MCF 10A (cell line): ENCODE measurements at regions of chr10 and their contacts with region 1.

Region 1: DNA sequence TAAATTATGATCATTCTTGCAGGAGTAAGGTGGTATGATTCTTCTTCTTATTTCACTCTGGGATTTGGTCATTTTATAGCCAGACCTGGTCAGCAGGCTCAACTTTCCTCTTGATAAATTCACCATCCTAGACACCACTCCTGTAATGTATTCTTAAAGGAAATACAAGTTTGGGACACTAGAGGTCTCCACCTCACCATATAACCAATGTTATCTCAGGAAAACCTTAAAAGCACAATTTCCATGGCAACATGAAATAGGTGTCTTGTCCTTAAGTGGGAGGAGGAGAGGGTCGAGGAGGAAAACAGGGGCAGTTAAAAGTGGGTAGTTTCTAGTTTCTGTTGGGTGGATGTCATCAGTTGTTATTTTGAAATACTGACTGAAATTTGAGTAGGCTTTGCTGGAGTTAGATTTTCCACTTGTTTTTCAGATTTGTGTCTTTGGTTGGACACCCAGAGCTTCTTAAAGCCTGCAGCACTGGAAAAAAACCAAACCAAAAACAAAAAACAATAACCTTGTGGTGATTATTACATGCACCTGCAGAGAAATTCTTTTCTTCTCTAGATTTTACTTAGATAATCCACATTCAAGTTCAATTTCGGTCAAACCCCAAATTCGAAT is 163.1 kb downstream of the PRKCQ start:
- DNase-seq: peak; percentile 58
- H3K4me3 Mint-ChIP-seq: no peak overlapping the region
- H3K27ac Mint-ChIP-seq: no peak overlapping the region
- H3K4me1 Mint-ChIP-seq: no peaks in the 10 kb centered on the region
- H3K27me3 Mint-ChIP-seq: peaks cover 14% of the 10 kb centered on the region
- CTCF ChIP-seq: peak; percentile 75

Region 2: GRCh38 chr10:6163364-6164270 is 253.4 kb before region 1 on chr10:
- CTCF ChIA-PET with region 1: no interaction called
- POLR2A ChIA-PET with region 1: no interaction called
- intact Hi-C with region 1: no loop called
- DNase-seq: peak; percentile 85
- H3K4me3 Mint-ChIP-seq: peak overlapping the region; percentile 95
- H3K27ac Mint-ChIP-seq: peak overlapping the region; percentile 93
- H3K4me1 Mint-ChIP-seq: peaks cover 18% of the 10 kb centered on the region
- H3K27me3 Mint-ChIP-seq: no peaks in the 10 kb centered on the region
- CTCF ChIP-seq: no peak

Region 3: DNA sequence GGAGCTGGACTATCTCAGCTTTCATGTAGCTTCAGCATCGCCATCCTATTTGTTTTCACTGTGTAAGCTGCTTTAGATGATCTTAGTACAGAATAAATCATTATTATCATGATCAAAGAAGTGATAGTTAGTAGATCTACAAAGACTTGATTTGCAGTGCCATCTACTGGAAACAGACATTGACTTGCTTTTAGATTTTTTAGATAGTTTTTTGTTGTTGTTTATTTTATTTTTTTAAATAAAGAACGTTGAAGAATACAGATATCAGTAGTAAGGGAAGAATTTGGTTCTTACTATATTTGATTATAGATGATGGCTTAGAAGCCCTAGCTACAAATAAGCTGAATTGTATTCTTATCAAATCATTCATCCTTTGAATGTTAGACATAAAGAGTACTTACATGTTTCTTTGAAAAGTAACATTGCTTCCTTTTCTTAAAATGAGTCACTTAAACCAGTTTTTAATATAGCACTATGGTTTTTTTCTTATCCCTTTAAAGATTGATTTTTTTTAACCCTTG is 1000.2 kb after region 1 on chr10:
- CTCF ChIA-PET with region 1: interaction called, 5 read pairs
- POLR2A ChIA-PET with region 1: no interaction called
- intact Hi-C with region 1: loop called (anchors 2 kb)
- DNase-seq: peak; percentile 55
- H3K4me3 Mint-ChIP-seq: no peak overlapping the region
- H3K27ac Mint-ChIP-seq: no peak overlapping the region
- H3K4me1 Mint-ChIP-seq: no peaks in the 10 kb centered on the region
- H3K27me3 Mint-ChIP-seq: peaks cover 28% of the 10 kb centered on the region
- CTCF ChIP-seq: peak; percentile 65